ENCODE measurements at regions of chr7 and their contacts with region 1.

Region 1: GRCh38 chr7:142323706-142324105 is 65.8 kb upstream of the PRSS58 start:
- DNase-seq: peak; percentile 88
- ATAC-seq: peak; percentile 71
- H3K4me3 Mint-ChIP-seq: no peak overlapping the region
- H3K27ac Mint-ChIP-seq: peak overlapping the region; percentile 16; the same call in 1 of the 2 replicates
- H3K4me1 Mint-ChIP-seq: peaks cover 32% of the 10 kb centered on the region
- H3K27me3 Mint-ChIP-seq: no peaks in the 10 kb centered on the region; the same call in 1 of the 2 replicates
- CTCF ChIP-seq: peak; percentile 70

Region 2: DNA sequence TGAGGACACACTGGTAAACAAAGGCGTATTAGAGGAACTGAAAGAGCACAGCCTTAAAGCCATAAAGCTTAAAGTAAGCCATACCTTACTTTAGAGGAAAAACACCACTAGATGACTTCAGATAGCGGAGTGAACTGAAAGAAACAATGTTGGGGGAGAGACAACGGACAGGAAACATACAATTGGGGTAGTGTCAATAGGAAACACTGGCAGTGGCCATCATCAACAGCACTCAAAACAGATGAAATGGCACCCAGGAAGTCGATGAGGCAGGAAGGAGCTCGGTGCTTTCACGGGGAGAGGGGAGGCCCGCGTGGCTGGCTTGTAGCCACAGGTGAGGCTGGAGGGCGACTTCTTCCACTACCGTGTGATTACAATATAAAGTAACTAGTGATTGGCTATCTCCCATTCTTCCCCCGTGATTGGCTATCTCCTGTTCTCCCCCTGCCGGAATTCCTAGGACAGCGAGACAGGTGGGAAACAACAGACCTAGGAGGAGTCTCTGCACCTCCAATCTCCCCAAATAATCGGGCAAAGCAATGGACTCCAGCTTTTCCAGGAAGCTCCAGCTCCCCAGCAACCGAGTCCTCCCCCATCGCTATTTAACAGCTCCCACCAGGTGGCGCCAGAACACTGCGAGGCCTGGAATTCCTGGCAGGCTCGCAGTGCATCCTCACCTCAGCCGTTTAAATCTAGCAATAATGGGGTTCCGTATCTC is 347.7 kb before region 1 on chr7:
- CTCF ChIA-PET with region 1: interaction called, 10 read pairs
- POLR2A ChIA-PET with region 1: no interaction called
- DNase-seq: peak; percentile 95
- ATAC-seq: peak; percentile 97
- H3K4me3 Mint-ChIP-seq: peak overlapping the region; percentile 64
- H3K27ac Mint-ChIP-seq: peak overlapping the region; percentile 24
- H3K4me1 Mint-ChIP-seq: peaks cover 11% of the 10 kb centered on the region; the same call in 1 of the 2 replicates
- H3K27me3 Mint-ChIP-seq: no peaks in the 10 kb centered on the region
- CTCF ChIP-seq: peak; percentile 86

Region 3: DNA sequence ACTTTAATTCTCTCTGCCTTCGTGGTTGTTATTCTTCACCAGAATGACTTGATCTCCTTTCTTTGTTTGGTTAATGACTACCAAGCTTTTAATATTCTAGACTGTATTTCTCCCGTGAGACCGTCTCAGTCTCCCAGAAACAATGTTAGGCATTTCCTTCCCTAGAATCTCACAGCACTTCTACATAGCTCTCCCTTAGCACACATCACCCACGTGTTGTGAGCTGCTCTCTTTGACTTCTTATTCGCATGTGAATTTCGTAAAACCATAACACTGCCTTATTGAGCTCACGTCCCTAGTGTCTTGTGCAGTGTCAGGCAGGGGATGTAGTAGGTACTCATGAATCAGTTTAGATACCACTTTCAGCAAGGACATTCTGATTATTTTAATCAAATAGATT is 269.7 kb before region 1 on chr7:
- CTCF ChIA-PET with region 1: no interaction called
- POLR2A ChIA-PET with region 1: no interaction called
- DNase-seq: no peak
- ATAC-seq: no peak
- H3K4me3 Mint-ChIP-seq: no peak overlapping the region
- H3K27ac Mint-ChIP-seq: no peak overlapping the region
- H3K4me1 Mint-ChIP-seq: no peaks in the 10 kb centered on the region
- H3K27me3 Mint-ChIP-seq: no peaks in the 10 kb centered on the region
- CTCF ChIP-seq: no peak

Region 4: GRCh38 chr7:142301923-142302550 is 21.7 kb before region 1 on chr7:
- CTCF ChIA-PET with region 1: interaction called, 85 read pairs
- POLR2A ChIA-PET with region 1: no interaction called
- DNase-seq: no peak
- ATAC-seq: no peak
- H3K4me3 Mint-ChIP-seq: no peak overlapping the region
- H3K27ac Mint-ChIP-seq: no peak overlapping the region
- H3K4me1 Mint-ChIP-seq: peaks cover 29% of the 10 kb centered on the region
- H3K27me3 Mint-ChIP-seq: peaks cover 22% of the 10 kb centered on the region
- CTCF ChIP-seq: no peak

Region 5: DNA sequence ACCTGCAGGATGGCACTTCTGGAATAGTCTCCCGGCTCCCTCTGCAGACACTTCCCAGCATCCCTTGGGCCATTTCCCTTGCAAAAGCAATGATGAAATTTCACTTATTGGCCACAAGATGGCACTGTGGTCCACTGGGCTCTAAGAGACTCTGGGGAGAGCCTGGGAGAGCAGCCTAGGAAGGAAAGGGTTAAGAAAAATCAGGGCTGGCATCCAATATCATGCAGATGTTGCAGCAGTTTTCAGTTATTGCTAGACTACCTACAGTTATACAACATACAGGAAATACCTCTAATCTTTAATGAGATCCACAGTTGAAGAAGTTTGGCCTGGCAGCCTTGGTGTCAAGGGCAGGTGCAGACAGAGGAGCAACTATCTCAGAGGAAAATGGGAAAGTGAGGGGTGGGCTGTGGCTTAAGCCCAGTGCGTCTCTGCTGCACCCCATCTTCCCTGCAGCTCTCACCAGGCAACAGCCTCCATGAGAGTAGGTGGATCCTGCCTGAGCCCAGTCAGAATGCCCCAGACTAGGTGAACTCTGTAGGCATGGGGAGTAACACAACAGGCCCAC is 34.3 kb after region 1 on chr7:
- CTCF ChIA-PET with region 1: interaction called, 13 read pairs
- POLR2A ChIA-PET with region 1: interaction called, 3 read pairs
- DNase-seq: peak; percentile 28
- ATAC-seq: peak; percentile 92
- H3K4me3 Mint-ChIP-seq: no peak overlapping the region
- H3K27ac Mint-ChIP-seq: no peak overlapping the region
- H3K4me1 Mint-ChIP-seq: peaks cover 34% of the 10 kb centered on the region
- H3K27me3 Mint-ChIP-seq: peaks cover 12% of the 10 kb centered on the region
- CTCF ChIP-seq: peak; percentile 71

Region 6: DNA sequence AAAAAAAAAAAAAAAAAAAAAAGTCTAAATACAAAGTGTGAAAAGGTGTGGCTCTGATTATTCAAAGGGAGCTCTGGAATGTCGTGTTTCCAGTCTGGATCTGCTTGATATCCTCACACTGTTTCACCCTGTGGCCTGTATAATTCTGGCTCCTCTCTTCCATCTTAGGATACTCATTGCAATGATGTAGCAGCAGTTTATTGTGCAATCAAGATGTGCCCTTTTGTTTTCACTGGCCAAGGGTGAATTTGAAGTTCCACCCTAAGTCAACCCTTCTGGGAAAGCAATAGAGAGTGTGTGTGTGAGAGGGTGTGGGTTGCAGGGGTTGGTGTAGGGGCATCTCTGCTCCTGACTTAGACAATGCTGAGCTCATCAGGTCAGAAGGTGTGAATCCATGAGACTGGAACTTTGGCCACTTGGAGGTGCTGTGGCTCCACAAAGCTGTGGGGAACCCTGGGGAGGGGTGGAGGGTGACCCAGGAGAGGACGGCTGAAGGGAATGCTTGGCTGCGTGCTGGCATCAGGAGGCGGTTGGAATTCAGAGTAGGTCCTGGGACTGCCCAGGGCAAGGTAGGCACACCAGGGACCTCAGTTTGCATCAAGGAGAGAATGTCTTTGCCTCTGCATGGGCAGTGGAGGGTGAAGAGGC is 52.1 kb after region 1 on chr7:
- CTCF ChIA-PET with region 1: interaction called, 11 read pairs
- POLR2A ChIA-PET with region 1: no interaction called
- DNase-seq: peak; percentile 81
- ATAC-seq: peak; percentile 97
- H3K4me3 Mint-ChIP-seq: no peak overlapping the region
- H3K27ac Mint-ChIP-seq: peak overlapping the region; percentile 22
- H3K4me1 Mint-ChIP-seq: peaks cover 20% of the 10 kb centered on the region
- H3K27me3 Mint-ChIP-seq: peaks cover 3% of the 10 kb centered on the region
- CTCF ChIP-seq: no peak; the same call in 1 of the 2 replicates

Region 7: DNA sequence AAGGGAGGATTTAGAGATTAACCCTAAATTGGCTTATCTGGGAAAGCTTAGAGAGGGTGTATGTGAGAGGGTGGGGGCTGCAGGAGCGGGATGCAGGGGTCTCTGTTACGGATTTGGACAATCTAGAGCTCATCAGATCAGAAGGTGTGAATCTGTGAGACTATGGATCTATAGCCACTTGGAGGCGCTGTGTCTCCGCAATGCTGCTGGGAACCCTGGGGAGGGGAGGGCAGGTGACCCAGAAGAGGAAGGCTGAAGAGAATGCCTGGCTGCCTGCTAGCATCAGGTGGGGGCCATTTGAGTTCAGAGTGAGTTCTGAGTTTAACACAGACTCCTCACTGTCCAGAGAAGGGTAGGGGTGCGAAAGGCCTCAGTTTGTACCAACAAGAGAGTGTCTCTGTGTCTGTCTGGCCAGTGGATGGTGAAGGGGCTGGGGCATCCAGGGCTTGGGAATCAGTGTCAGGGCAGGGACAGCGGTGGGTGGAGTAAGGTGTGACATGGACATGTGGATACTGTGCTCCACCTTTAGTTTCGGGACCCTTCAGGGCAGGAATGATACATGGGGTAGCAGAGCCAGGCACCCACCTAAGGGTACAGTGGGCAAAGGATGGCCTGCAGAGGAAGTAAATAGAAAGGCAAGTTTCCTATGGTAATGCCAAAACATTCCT is 121.4 kb after region 1 on chr7:
- CTCF ChIA-PET with region 1: interaction called, 13 read pairs
- POLR2A ChIA-PET with region 1: no interaction called
- DNase-seq: peak; percentile 80
- ATAC-seq: peak; percentile 96
- H3K4me3 Mint-ChIP-seq: no peak overlapping the region
- H3K27ac Mint-ChIP-seq: no peak overlapping the region
- H3K4me1 Mint-ChIP-seq: peaks cover 27% of the 10 kb centered on the region
- H3K27me3 Mint-ChIP-seq: no peaks in the 10 kb centered on the region
- CTCF ChIP-seq: peak; percentile 65

Region 8: GRCh38 chr7:142516038-142516501 is 192.4 kb after region 1 on chr7:
- CTCF ChIA-PET with region 1: interaction called, 10 read pairs
- POLR2A ChIA-PET with region 1: no interaction called
- DNase-seq: peak; percentile 26
- ATAC-seq: peak; percentile 92
- H3K4me3 Mint-ChIP-seq: no peak overlapping the region
- H3K27ac Mint-ChIP-seq: no peak overlapping the region
- H3K4me1 Mint-ChIP-seq: peaks cover 9% of the 10 kb centered on the region
- H3K27me3 Mint-ChIP-seq: peaks cover 5% of the 10 kb centered on the region; the same call in 1 of the 2 replicates
- CTCF ChIP-seq: peak; percentile 41; the same call in 1 of the 2 replicates

Region 9: DNA sequence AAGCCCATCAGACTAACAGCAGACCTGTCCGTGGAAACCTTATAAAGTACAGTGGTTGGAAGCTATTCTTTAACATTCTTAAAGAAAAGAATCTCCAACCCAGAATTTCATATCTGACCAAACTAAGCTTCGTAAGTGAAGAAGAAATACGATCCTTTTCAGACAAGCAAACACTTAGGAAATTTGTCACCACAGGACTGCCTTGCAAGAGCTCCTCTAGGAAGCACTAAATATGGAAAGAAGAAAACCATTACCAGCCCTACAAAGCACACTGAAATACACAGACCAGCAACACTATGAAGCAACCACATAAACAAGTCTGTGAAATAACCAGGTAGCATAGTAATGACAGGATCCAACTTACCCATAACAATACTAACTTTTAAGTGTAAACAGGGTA is 247.9 kb after region 1 on chr7:
- CTCF ChIA-PET with region 1: no interaction called
- POLR2A ChIA-PET with region 1: no interaction called
- DNase-seq: no peak
- ATAC-seq: no peak
- H3K4me3 Mint-ChIP-seq: no peak overlapping the region
- H3K27ac Mint-ChIP-seq: no peak overlapping the region
- H3K4me1 Mint-ChIP-seq: no peaks in the 10 kb centered on the region
- H3K27me3 Mint-ChIP-seq: peaks cover 3% of the 10 kb centered on the region; the same call in 1 of the 2 replicates
- CTCF ChIP-seq: no peak